SK-N-SH (cell line): ENCODE measurements at regions of chr10 and their contacts with region 1.

Region 1: GRCh38 chr10:101840741-101841453 is 2.7 kb downstream of the KCNIP2 start:
- DNase-seq: peak; percentile 93
- H3K4me3 ChIP-seq: peak overlapping the region in 1 of 2 experiments; percentile 45; a peak in 1 of 4 replicates
- H3K27ac ChIP-seq: no peak overlapping the region
- H3K4me1 ChIP-seq: peaks cover 0 to 16% of the 10 kb centered on the region in 2 experiments; a peak in 1 of 4 replicates
- H3K27me3 ChIP-seq: no peaks in the 10 kb centered on the region
- CTCF ChIP-seq: peak; percentile 96
- EP300 ChIP-seq: no peak
- RAD21 ChIP-seq: peak; percentile 90

Region 2: DNA sequence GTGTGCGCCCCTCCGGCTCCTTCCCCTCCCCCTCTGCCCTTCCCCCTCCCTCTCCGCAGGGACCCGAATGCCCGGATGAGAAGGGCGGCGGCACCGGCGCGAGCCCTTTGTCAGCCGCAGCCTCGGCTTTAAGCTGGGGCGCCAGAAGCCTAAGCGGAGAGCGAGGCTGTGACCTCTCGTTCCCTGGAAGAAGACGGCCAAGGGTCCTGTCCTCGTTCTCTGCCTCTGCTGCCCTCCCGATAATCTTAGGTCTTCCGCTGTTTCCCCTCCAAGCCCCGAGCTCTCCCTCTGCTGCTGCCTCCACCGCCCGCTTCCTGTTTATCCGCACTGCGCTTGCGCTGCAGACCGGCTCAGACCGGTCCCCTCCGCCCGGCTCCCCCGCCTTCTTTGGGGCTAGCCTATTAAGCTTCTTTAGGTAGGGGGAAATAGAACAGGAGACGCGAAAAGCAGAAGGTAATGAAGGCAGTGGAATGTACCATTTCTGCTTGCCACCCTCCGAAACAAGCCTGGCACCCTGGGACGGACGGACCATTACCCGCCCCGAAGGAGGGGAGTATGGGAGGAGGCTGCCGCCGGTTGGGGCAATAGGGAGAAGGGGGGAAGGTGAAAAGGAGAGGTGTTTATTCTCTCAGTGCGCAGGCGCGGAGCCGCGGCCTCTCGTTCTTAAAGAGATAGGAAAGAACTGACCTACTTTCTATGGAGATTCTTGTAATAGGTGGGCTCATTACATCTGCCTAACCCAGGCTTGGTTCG is 22.6 kb before region 1 on chr10 and contains the start of gene OGA:
- CTCF ChIA-PET with region 1: interaction called, 19 read pairs
- POLR2A ChIA-PET with region 1: interaction called, 10 read pairs
- DNase-seq: peak; percentile 96
- H3K4me3 ChIP-seq: peak within 1 kb of the TSS; percentile 88 to 96
- H3K27ac ChIP-seq: peak within 1 kb of the TSS; percentile 81 to 97
- H3K4me1 ChIP-seq: peaks cover 6 to 21% of the 10 kb centered on the region in 2 experiments; a peak in 3 of 4 replicates
- H3K27me3 ChIP-seq: no peaks in the 10 kb centered on the region
- CTCF ChIP-seq: no peak
- EP300 ChIP-seq: peak in 1 of 2 experiments; percentile 53; a peak in 1 of 4 replicates
- RAD21 ChIP-seq: no peak
- polyA plus RNA-seq, gene OGA: 24.8 and 36.6 TPM in 2 replicates

Region 3: GRCh38 chr10:101858723-101859500 is 18.0 kb after region 1 on chr10:
- CTCF ChIA-PET with region 1: interaction called, 169 read pairs
- POLR2A ChIA-PET with region 1: interaction called, 4 read pairs
- DNase-seq: no peak
- H3K4me3 ChIP-seq: no peak overlapping the region
- H3K27ac ChIP-seq: no peak overlapping the region
- H3K4me1 ChIP-seq: no peaks in the 10 kb centered on the region
- H3K27me3 ChIP-seq: no peaks in the 10 kb centered on the region
- CTCF ChIP-seq: no peak
- EP300 ChIP-seq: no peak
- RAD21 ChIP-seq: no peak

Region 4: GRCh38 chr10:101897633-101898032 is 56.7 kb after region 1 on chr10:
- CTCF ChIA-PET with region 1: interaction called, 11 read pairs
- POLR2A ChIA-PET with region 1: no interaction called
- DNase-seq: peak; percentile 8
- H3K4me3 ChIP-seq: no peak overlapping the region
- H3K27ac ChIP-seq: no peak overlapping the region
- H3K4me1 ChIP-seq: peaks cover 5 to 8% of the 10 kb centered on the region in 2 experiments; a peak in 1 of 4 replicates
- H3K27me3 ChIP-seq: no peaks in the 10 kb centered on the region
- CTCF ChIP-seq: no peak
- EP300 ChIP-seq: no peak
- RAD21 ChIP-seq: no peak

Region 5: GRCh38 chr10:101986625-101986973 is 145.7 kb after region 1 on chr10:
- CTCF ChIA-PET with region 1: interaction called, 22 read pairs
- POLR2A ChIA-PET with region 1: no interaction called
- DNase-seq: peak; percentile 24
- H3K4me3 ChIP-seq: no peak overlapping the region
- H3K27ac ChIP-seq: peak overlapping the region in 1 of 2 experiments; percentile 24; a peak in 1 of 4 replicates
- H3K4me1 ChIP-seq: peaks cover 0 to 8% of the 10 kb centered on the region in 2 experiments; a peak in 2 of 4 replicates
- H3K27me3 ChIP-seq: no peaks in the 10 kb centered on the region
- CTCF ChIP-seq: no peak
- EP300 ChIP-seq: no peak
- RAD21 ChIP-seq: no peak

Region 6: GRCh38 chr10:102001435-102002068 is 160.7 kb after region 1 on chr10:
- CTCF ChIA-PET with region 1: interaction called, 301 read pairs
- POLR2A ChIA-PET with region 1: no interaction called
- DNase-seq: no peak
- H3K4me3 ChIP-seq: no peak overlapping the region
- H3K27ac ChIP-seq: no peak overlapping the region
- H3K4me1 ChIP-seq: no peaks in the 10 kb centered on the region
- H3K27me3 ChIP-seq: no peaks in the 10 kb centered on the region
- CTCF ChIP-seq: no peak
- EP300 ChIP-seq: no peak
- RAD21 ChIP-seq: no peak

Region 7: DNA sequence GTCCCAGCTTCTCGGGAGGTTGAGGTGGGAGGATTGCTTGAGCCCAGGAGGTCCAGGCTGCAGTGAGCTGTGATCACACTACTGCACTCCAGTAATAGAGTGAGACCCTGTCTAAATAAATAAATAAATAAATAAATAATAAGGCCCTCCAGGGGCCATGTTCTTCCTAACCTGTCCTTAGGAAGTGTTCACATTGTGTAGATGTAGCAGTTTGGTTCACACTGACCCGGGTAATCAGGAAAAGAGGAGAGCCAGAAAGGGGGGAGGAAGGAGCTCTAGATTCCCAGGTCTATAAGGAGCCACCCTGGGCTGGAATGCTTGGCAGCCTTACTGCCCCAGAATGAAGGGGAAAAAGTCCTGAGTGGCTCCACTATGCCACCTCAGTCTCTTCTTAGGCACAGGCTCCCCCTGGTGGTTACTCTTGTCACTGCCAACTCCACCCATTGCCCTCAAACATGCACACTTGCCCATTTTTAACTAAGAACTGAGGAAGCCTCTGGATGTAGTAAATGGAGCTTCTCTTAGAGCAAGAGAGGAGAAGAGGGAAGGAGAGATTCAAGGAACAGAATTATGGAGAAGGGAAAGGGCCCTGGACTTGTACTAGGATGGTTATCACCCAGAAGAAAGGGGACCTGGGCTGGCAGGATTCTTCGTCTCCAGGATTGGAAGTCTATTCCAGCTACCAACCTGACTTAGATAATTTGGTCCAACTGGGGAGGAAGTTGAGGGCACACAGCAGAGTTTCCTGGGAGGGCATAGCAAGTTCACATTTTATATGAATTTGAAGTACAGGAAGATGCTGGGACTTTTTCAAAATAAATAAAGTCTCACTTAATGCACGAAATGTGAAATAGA is 232.0 kb after region 1 on chr10:
- CTCF ChIA-PET with region 1: interaction called, 44 read pairs
- POLR2A ChIA-PET with region 1: no interaction called
- DNase-seq: peak; percentile 78
- H3K4me3 ChIP-seq: no peak overlapping the region
- H3K27ac ChIP-seq: no peak overlapping the region
- H3K4me1 ChIP-seq: peaks cover 0 to 4% of the 10 kb centered on the region in 2 experiments; a peak in 2 of 4 replicates
- H3K27me3 ChIP-seq: no peaks in the 10 kb centered on the region
- CTCF ChIP-seq: peak; percentile 92
- EP300 ChIP-seq: no peak
- RAD21 ChIP-seq: peak; percentile 84